Right ventricle myocardium inferior (tissue), 1 donor: ENCODE measurements at regions of chr7 and their contacts with region 1.

Region 1: DNA sequence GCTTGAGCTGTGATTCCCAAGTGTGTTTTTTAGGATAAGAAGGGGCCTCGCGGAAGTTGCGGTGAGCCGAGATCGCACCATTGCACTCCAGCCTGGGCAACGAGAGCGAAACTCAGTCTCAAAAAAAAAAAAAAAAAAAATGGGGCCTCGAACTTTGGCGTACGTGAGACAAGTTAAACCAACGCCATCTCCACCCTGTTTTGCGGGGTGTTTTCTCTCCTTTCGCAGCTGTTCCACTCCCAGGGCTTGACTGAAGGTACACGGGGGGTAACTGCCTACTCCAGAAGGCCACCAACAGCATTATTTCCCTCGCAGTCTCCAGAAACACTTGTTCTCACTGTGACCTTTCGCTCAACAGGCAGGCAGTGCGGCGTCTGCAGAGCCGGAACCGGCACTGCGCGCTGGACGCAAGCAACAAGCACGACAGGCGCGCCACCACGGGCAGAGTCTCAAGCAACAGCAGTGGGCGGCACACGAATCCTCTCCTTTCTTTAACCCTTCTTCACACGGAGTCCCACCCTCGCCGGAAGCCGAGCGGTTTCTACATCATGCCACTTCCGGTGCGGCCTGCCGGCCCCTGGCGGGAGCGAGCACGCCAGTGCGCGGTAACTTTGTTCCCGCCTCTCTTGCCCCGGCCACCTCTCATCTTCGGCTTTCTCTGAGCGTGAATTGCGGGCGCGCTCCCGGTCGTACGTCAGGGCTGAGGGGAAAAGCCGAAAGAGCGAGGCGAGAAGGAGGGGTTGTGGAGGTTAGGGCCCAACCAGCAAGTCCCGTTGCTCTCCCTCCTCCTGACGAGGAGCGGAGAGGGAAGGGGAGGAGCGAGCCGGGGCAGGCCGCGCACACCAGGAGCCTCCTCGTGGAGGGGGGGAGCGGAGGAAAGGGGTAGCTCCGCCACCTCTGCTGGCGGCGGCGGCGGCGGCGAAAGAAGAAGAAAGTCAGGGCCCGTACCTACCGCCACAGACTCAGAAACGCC is 814 bp upstream of the CDK13 start:
- DNase-seq: peak; percentile 99
- ATAC-seq: peak; percentile 94

Region 2: DNA sequence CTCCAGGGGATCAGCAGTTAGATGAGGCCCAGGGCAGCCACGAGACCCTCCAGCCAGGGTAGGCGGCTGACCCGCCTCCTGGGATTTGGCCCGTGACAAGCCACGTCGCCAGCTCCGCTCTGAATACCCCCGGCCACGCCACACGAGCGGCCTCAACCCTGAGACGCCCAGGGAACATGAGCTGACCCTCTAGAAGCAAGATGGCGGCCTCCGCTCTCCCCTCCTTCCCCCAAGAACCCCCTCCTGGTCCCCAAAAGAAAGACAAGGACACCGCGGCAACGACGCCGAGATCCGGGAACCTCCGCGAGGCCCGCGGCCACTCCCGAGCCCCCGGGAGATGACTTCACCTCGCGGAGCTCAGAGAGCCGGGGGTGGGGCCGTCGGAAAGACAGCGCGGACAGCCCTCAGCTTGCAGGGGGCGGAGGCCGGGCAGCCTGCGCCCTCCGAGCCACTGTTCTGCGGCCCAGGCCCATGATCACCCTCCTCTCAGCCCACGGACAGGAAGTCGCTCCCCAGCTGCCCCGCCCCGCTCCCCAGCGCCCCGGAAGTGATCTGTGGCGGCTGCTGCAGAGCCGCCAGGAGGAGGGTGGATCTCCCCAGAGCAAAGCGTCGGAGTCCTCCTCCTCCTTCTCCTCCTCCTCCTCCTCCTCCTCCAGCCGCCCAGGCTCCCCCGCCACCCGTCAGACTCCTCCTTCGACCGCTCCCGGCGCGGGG is 326.1 kb before region 1 on chr7 and contains the start of gene RALA:
- intact Hi-C with region 1: loop called (anchors 5 kb)
- DNase-seq: peak; percentile 94
- ATAC-seq: peak; percentile 99
- total RNA-seq, gene RALA: 35.7 TPM

Region 3: GRCh38 chr7:39894904-39895303 is 54.3 kb before region 1 on chr7:
- intact Hi-C with region 1: loop called (anchors 1 kb)
- DNase-seq: no peak
- ATAC-seq: no peak

Region 4: DNA sequence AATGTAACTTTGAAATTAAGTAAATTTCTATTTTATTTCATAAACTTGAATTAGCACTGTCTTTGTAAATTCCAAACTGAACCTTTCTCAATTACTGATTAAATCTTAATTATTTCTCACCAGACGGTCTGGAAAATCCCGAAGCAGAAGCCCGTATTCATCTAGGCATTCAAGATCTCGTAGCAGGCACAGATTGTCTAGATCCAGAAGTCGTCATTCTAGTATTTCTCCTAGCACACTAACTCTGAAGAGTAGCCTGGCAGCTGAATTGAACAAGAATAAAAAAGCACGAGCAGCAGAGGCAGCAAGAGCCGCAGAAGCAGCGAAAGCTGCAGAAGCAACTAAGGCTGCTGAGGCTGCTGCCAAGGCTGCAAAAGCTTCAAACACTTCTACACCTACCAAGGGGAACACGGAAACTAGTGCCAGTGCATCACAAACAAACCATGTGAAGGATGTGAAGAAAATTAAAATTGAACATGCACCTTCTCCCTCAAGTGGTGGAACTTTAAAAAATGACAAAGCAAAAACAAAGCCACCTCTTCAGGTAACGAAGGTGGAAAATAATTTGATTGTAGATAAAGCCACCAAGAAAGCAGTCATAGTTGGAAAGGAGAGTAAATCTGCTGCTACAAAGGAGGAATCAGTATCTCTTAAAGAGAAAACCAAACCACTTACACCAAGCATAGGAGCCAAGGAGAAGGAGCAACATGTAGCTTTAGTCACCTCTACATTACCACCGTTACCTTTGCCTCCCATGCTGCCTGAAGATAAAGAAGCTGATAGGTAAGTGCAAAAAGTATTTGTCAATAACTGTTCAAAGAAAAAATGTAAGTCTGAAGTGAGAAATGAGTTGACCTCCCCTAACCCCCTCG is 38.5 kb after region 1 on chr7:
- intact Hi-C with region 1: loop called (anchors 5 kb)
- DNase-seq: no peak
- ATAC-seq: no peak

Region 5: DNA sequence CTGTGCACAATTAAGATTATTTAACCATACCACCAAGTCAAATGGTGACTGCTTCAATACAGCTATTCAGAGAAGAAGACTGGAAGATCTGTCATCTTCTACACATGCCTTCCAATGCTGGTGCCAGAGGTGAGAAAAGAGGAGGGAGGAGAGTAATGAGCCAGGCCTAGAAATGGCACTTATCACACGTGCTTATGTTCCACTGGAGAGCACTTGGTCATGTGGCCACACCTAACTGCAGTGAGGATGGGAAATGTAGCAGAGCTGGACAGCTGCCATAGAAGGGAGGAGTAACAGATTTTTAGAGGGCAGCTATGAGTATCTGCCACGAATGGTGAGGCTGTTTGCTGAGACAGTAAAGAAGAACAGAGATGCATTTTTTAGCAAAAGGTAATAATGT is 108.0 kb after region 1 on chr7:
- intact Hi-C with region 1: loop called (anchors 1 kb)
- DNase-seq: no peak
- ATAC-seq: peak; percentile 64

Region 6: GRCh38 chr7:40134428-40135316 is 185.4 kb after region 1 on chr7 and contains the starts of genes MPLKIP and SUGCT:
- intact Hi-C with region 1: loop called (anchors 5 kb)
- DNase-seq: peak; percentile 93
- ATAC-seq: peak; percentile 97
- total RNA-seq, gene MPLKIP: 17.8 TPM
- total RNA-seq, gene SUGCT: 4.4 TPM